MCF 10A (cell line): ENCODE measurements at regions of chr5 and their contacts with region 1.

Region 1: DNA sequence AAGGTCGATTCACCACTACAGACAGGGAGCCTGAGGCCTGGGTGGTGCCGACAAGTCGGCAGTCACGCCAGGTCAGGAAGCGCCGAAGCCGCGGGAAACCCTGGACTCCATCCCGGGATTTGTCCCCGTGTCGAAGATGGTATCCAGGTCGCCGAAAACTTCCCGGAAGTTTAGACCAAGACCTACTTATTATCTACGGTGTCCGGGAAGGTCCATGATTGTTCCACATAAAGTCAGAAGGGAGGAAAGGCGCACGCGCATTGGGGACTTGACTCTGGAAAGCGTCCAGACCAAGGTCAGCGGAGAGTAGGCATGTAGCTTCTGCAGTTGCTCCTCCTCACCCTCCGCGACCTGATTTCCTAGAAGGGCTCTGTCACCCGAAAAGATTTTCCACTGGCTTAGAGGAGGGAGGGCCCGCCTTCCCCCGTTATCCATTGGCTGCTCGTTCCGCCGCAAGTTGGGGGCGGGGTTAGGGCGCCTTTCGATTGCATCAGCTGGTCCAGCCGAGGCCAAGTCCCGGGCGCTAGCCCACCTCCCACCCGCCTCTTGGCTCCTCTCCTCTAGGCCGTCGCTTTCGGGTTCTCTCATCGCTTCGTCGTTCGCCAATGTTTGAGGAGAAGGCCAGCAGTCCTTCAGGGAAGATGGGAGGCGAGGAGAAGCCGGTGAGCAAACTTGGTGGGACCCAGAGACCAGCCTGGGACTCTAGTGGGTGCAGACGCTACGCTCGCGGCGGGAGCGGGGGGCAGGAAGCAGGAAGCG is at the start of gene TARS1:
- DNase-seq: peak; percentile 100
- H3K4me3 Mint-ChIP-seq: no peak within 1 kb of the TSS
- H3K27ac Mint-ChIP-seq: no peak within 1 kb of the TSS
- H3K4me1 Mint-ChIP-seq: peaks cover 30% of the 10 kb centered on the region
- H3K27me3 Mint-ChIP-seq: no peaks in the 10 kb centered on the region
- CTCF ChIP-seq: no peak
- total RNA-seq, gene TARS1: 386 and 469 TPM in 2 replicates

Region 2: DNA sequence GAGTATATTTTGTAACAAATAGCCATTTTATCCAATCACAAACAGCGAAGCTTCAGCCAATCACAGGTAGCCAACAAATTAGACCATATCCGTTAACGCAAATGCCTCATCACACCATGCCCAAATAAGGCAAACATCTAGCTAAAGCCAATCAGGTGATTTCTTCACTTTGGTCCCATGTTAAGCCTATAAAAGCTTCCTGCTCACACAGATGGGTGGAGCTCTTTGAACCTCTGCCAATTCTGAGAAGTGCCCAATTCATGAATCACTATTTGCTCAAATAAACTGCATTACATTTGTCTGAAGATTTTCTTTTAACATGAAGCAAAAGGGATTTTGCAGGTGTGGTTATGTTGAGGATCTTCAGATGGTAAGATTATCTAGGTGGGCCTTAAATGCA is 127.5 kb before region 1 on chr5:
- CTCF ChIA-PET with region 1: interaction called, 4 read pairs
- POLR2A ChIA-PET with region 1: interaction called, 10 read pairs
- intact Hi-C with region 1: no loop called
- DNase-seq: peak; percentile 95
- H3K4me3 Mint-ChIP-seq: no peak overlapping the region
- H3K27ac Mint-ChIP-seq: peak overlapping the region; percentile 97
- H3K4me1 Mint-ChIP-seq: peaks cover 36% of the 10 kb centered on the region
- H3K27me3 Mint-ChIP-seq: no peaks in the 10 kb centered on the region
- CTCF ChIP-seq: no peak

Region 3: GRCh38 chr5:33457126-33457525 is 16.5 kb after region 1 on chr5:
- CTCF ChIA-PET with region 1: interaction called, 3 read pairs
- POLR2A ChIA-PET with region 1: interaction called, 40 read pairs
- intact Hi-C with region 1: no loop called
- DNase-seq: no peak
- H3K4me3 Mint-ChIP-seq: no peak overlapping the region
- H3K27ac Mint-ChIP-seq: no peak overlapping the region
- H3K4me1 Mint-ChIP-seq: peaks cover 10% of the 10 kb centered on the region
- H3K27me3 Mint-ChIP-seq: no peaks in the 10 kb centered on the region
- CTCF ChIP-seq: no peak

Region 4: GRCh38 chr5:33969572-33970452 is 529.2 kb after region 1 on chr5:
- CTCF ChIA-PET with region 1: interaction called, 24 read pairs
- POLR2A ChIA-PET with region 1: interaction called, 4 read pairs
- intact Hi-C with region 1: loop called (anchors 1 kb)
- DNase-seq: peak; percentile 35
- H3K4me3 Mint-ChIP-seq: no peak overlapping the region
- H3K27ac Mint-ChIP-seq: no peak overlapping the region
- H3K4me1 Mint-ChIP-seq: no peaks in the 10 kb centered on the region
- H3K27me3 Mint-ChIP-seq: no peaks in the 10 kb centered on the region
- CTCF ChIP-seq: peak; percentile 56

Region 5: GRCh38 chr5:34915139-34915855 is 1474.6 kb after region 1 on chr5 and contains the starts of genes BRIX1 and RAD1:
- CTCF ChIA-PET with region 1: no interaction called
- POLR2A ChIA-PET with region 1: no interaction called
- intact Hi-C with region 1: loop called (anchors 10 kb)
- DNase-seq: peak; percentile 97
- H3K4me3 Mint-ChIP-seq: no peak within 1 kb of the TSS
- H3K27ac Mint-ChIP-seq: no peak within 1 kb of the TSS
- H3K4me1 Mint-ChIP-seq: peaks cover 12% of the 10 kb centered on the region
- H3K27me3 Mint-ChIP-seq: no peaks in the 10 kb centered on the region
- CTCF ChIP-seq: no peak
- total RNA-seq, gene BRIX1: 36.0 and 50.8 TPM in 2 replicates
- total RNA-seq, gene RAD1: 16.7 and 17.2 TPM in 2 replicates